ENCODE measurements at regions of chr9 and their contacts with region 1.

Region 1: DNA sequence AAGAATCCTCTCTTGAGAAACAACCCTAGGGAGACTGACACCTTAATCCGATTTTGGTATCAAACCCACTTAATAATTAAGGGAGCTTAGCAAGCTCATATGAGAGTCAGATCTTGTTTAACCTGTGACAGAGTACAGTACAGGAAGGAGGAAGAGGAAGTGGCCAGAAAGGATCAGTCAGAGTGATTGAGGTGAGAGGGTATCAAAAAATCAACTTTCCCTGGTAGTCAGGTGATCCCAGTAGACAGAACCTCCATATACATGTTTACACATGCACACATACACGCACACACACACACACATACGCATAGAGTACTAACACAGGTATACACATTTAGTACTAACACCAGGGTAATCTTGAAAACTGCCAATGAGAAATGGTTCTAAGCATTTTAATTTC is 56.8 kb downstream of the GLIS3 start:
- DNase-seq: peak; percentile 16
- H3K4me3 Mint-ChIP-seq: no peak overlapping the region
- H3K27ac Mint-ChIP-seq: peak overlapping the region; percentile 67
- H3K4me1 Mint-ChIP-seq: peaks cover 50% of the 10 kb centered on the region
- H3K27me3 Mint-ChIP-seq: no peaks in the 10 kb centered on the region
- CTCF ChIP-seq: no peak

Region 2: DNA sequence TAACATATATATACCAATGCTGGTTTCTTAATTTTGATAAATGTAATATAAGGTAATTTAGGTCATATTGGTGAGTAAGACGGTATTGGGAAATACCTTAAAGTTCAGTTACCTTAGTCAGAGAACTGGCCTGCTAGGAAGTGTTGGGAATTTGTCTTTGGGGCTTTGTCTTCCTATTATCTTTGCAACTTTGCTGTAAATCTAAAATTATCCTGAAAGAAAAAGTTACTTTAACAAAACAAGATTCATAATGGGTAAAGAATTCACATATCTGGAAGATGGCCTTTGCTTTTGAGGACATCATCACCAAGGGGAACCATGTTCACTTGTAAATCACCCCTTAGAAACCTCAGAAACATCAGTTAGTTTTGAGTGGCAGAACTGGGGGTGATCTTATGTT is 15.2 kb after region 1 on chr9:
- CTCF ChIA-PET with region 1: interaction called, 5 read pairs
- intact Hi-C with region 1: loop called (anchors 2 kb)
- DNase-seq: no peak
- H3K4me3 Mint-ChIP-seq: no peak overlapping the region
- H3K27ac Mint-ChIP-seq: no peak overlapping the region
- H3K4me1 Mint-ChIP-seq: peaks cover 42% of the 10 kb centered on the region
- H3K27me3 Mint-ChIP-seq: no peaks in the 10 kb centered on the region
- CTCF ChIP-seq: no peak